Heart left ventricle (tissue), 16 donors: ENCODE measurements at regions of chr11 and their contacts with region 1.

Region 1: DNA sequence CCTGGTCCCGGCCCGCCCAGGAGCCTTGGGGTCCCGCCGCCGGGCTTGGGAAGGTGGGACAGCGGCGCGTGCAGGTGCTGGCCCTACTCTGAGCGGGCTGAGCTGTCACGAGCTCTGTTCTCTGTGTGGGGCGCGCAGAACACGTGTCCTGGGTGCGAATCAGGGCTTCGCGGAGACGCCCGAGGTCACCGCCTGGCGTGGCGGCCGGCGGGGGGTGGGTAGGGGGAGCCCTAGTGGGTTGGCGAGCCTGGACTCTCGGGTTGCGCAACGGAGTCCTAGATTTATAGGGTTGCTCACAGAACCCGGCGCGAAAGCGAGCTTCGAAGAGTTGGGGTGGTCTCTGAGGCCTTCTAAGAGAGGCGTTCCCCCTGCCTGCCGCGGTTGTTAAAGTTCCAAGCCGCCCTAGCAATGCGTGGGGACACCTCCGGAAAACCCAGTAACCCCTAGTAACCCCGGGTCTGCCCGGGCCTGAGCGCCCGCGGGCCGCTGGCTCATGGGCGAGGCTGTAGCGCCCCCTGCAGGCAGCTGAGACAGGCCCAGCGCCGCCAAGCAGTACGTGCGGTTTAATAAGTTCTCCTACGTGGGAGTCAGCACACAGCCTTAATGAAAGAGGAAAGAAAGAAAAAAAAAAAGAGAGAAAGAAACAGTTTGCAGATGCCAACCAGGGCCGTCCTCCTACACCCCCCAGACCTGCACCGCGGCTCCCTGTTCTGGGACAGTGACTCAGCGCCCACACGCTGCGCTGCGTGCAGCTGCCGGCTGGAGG is 2.8 kb downstream of the ADM start:
- DNase-seq: peak; percentile 82 to 93 (median 88)
- ATAC-seq: peak; percentile 29 to 70 (median 69)
- H3K4me3 ChIP-seq: peak overlapping the region; percentile 16 to 88 (median 76)
- H3K27ac ChIP-seq: peak overlapping the region; percentile 4 to 90 (median 86)
- H3K4me1 ChIP-seq: peaks cover 0 to 72% (median 54%) of the 10 kb centered on the region in 12 donors
- H3K27me3 ChIP-seq: no peaks in the 10 kb centered on the region
- CTCF ChIP-seq: peak; percentile 95 to 100 (median 99)
- POLR2A ChIP-seq: peak in 1 of 2 donors; percentile 17

Region 2: DNA sequence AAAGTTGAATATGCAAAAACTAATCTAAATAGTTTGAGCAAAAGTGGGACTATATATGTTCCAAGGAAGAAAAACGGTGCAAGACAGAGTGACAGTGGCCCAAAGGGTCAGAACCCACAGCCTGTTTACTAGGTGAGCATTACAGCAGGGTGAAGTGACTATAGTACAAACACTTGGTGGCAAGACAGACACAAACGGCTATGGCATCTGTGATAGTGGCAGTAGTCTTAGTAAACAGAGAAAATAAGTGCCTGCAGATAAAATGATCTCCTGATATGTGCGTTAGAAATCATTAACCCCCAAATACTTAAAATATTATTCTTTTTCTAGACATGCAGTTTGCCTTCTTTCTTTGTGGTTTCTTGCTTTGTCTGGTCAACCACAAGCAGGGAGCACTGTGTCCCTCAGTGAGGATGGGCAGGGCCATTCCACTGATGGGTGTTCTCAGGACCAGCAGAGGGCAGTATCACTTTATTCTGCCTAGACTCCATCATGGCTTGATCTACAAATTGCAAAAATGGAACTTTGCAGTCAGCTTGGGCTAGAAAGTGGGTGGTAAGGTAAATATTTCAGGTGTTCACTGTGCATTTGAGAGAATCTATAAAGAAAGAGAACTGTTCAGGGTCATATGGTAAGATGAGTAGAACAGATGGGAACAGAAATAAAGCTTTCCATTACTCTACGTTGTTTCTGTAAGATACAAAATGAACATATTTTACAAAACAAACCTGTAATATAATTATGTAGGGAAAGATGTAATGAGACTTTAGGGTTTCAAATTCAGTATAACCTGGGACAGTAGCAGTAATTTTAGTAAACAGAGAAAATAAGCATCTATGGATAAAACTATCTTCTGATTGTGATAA is 445.5 kb before region 1 on chr11:
- intact Hi-C with region 1: loop called in 6 of 10 experiments (anchors 1 to 5 kb)
- DNase-seq: peak in 4 of 5 donors; percentile 31 to 48 (median 38)
- ATAC-seq: peak in 3 of 4 donors; percentile 82 to 85 (median 84)
- H3K4me3 ChIP-seq: no peak overlapping the region
- H3K27ac ChIP-seq: no peak overlapping the region
- H3K4me1 ChIP-seq: peaks cover 0 to 17% (median 5%) of the 10 kb centered on the region in 12 donors
- H3K27me3 ChIP-seq: no peaks in the 10 kb centered on the region
- CTCF ChIP-seq: peak; percentile 54 to 79 (median 64)
- POLR2A ChIP-seq: no peak

Region 3: DNA sequence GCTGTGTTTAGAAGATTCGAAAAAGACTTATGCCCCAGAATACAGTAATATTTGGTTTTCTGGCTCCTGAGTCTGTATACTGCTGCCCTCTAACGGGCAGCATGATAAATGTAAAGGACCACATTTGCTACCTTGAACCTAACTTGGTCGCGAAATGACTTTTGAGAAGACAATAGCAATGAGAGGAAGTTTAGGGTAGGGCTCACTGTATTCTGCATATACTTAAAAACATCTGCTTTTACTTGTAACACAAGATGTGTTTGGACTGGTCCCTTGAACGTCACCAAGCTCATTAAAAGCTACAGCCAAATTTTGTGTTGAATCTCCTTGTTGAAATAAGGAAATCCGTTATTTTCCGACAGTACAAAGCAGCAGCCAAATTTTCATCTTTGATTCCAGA is 334.6 kb before region 1 on chr11:
- intact Hi-C with region 1: loop called (anchors 2 to 10 kb)
- DNase-seq: no peak
- ATAC-seq: peak; percentile 55 to 83 (median 68)
- H3K4me3 ChIP-seq: no peak overlapping the region
- H3K27ac ChIP-seq: no peak overlapping the region
- H3K4me1 ChIP-seq: peaks cover 0 to 21% (median 9%) of the 10 kb centered on the region in 12 donors
- H3K27me3 ChIP-seq: no peaks in the 10 kb centered on the region
- CTCF ChIP-seq: peak; percentile 50 to 83 (median 70)
- POLR2A ChIP-seq: no peak

Region 4: DNA sequence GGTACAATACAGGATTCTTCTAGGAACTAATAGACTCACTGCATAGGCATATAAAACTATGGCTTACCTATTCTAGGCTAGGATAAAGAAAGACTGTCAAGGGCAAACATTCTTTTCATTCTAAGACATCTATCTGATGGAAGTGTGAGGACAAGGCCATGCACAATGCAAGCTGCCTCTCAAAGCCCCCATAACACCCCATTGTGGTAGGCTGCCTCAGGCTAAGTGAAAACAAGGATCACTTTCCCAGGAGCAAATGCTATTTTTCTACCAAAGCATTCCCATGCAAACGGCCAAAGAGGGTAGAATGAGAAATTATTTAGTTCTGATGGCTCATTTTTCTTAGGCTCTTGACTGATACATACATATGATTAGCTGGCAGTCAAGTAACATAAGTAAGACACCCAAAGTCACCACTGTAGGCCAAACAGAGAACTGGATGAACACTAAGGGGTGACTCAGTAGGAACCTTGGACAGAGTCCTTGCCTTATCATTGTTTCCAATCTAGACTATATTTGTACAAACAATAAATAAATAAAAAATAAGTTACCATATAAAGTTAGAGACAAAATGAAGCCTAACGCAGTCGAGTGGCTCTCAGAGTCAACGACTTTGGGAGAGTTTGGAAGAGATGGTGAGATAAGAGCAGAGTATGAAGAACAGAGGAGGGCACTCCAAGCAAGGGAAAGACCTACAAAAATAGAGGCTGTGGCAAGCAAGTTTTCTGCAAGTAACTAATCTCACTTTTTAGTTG is 317.2 kb before region 1 on chr11:
- intact Hi-C with region 1: loop called in 2 of 10 experiments (anchors 5 kb)
- DNase-seq: no peak
- ATAC-seq: peak in 1 of 4 donors; percentile 36
- H3K4me3 ChIP-seq: no peak overlapping the region
- H3K27ac ChIP-seq: no peak overlapping the region
- H3K4me1 ChIP-seq: no peaks in the 10 kb centered on the region
- H3K27me3 ChIP-seq: no peaks in the 10 kb centered on the region
- CTCF ChIP-seq: peak in 8 of 12 donors; percentile 8 to 44 (median 18)
- POLR2A ChIP-seq: no peak

Region 5: DNA sequence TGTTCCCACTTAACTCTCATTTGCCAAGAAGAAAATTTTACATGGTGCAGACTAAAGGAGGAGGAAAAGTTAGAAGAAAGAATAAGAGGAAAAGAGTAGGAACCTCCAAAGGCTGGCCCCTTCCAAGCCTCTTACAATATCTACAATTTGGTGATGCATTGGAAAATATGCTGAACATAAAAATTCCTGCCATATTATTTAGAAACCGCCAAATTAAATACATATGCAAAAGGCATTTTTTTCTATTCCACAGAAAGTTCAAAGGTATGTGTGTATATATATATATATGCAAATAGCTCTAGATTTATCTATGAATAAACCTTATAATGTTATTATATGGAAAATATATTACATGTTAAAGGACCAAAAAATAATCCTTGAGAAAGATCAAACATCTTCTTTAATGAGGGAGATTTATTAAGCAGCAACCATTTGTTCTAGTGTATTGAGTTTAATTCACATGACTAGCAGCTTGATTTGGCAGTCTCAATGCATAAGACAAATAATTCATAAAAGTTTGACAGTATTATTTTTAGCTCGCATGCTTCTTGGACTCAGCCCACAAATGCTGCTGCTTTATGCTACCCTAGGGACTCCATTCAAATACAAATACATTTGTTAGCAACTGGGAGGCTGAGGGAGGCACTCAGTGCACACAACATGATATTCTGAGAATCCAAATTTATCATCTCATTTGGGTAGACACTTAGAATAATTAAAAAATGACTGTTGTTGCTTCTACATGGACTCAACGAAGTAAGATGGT is 198.5 kb before region 1 on chr11:
- intact Hi-C with region 1: loop called in 5 of 10 experiments (anchors 5 to 10 kb)
- DNase-seq: peak in 3 of 5 donors; percentile 22 to 42 (median 31)
- ATAC-seq: peak; percentile 62 to 88 (median 73)
- H3K4me3 ChIP-seq: no peak overlapping the region
- H3K27ac ChIP-seq: peak overlapping the region in 8 of 12 donors; percentile 19 to 58 (median 52)
- H3K4me1 ChIP-seq: peaks cover 0 to 41% (median 19%) of the 10 kb centered on the region in 12 donors
- H3K27me3 ChIP-seq: no peaks in the 10 kb centered on the region
- CTCF ChIP-seq: no peak
- POLR2A ChIP-seq: no peak

Region 6: DNA sequence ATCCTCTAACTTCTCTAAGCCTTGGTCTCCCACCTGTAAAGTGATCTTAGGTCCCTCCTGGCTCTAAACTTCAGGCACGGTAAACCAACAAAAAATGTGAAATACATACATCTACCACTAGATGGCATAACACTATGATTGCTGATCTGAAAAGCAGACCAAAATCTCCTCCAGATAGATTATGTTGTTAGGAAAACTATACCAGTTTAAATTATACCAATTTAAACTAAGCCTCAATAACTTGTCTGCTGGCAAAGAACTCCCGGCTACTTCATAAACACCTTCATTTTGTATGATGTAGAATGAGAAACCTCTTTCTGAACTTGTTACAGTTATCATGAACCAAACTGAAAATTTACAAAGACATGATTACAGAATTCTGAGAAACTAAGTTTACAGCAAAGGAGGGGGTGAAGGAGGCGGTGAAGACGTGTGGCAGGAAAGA is 99.5 kb before region 1 on chr11:
- intact Hi-C with region 1: loop called (anchors 1 to 5 kb)
- DNase-seq: no peak
- ATAC-seq: peak in 2 of 4 donors; percentile 46 to 54
- H3K4me3 ChIP-seq: no peak overlapping the region
- H3K27ac ChIP-seq: no peak overlapping the region
- H3K4me1 ChIP-seq: peaks cover 0 to 12% (median 3%) of the 10 kb centered on the region in 12 donors
- H3K27me3 ChIP-seq: no peaks in the 10 kb centered on the region
- CTCF ChIP-seq: peak; percentile 62 to 82 (median 74)
- POLR2A ChIP-seq: no peak

Region 7: DNA sequence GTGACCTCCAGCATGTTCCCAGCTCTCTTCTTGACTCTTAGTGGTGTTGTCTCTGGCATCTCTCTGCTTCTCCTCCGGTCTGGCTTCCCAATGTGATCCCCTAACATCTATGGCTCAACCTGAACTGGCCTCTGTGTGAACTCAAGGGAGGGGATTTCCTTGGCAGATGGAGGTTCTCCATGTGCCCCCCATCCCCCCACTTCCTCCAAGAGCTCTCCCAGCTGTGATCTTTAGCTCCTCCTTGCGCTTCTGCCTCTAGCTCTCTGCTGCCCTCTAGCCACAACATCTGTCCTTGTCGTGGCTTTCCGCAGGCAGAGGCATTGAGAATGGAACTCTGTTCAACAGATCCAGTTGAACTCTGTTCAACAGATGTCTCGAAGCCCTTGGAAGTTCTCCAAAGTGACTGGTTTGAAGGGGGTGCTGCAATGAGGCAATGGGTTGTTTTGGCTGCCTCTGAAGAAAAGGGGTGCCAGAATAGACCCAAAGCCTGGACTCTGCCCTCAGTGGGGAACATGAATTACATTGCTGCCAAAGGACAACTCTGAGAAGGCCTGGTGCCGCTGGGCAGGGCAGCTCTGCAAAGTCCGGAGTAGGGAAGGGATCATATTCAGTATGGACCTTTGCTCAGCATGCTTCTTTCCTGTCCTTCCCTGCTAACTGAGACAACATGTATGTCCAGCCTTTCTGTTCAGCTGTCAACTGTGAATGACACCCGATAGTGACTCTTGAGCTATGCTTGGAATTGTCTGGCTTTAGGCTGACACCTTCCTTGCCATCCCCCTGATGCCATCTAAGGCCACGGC is 59.1 kb after region 1 on chr11:
- intact Hi-C with region 1: loop called in 4 of 10 experiments (anchors 2 to 5 kb)
- DNase-seq: peak; percentile 72 to 88 (median 87)
- ATAC-seq: peak; percentile 76 to 96 (median 94)
- H3K4me3 ChIP-seq: no peak overlapping the region
- H3K27ac ChIP-seq: peak overlapping the region in 2 of 12 donors; percentile 7 to 42
- H3K4me1 ChIP-seq: peaks cover 0 to 10% (median 7%) of the 10 kb centered on the region in 12 donors
- H3K27me3 ChIP-seq: no peaks in the 10 kb centered on the region
- CTCF ChIP-seq: peak; percentile 77 to 94 (median 86)
- POLR2A ChIP-seq: no peak